Transverse colon (tissue), 4 donors: ENCODE measurements at regions of chr15 and their contacts with region 1.

Region 1: GRCh38 chr15:71114896-71115554 is at the start of gene THSD4:
- DNase-seq: peak; percentile 78
- H3K4me3 ChIP-seq: peak within 1 kb of the TSS; percentile 36 to 81 (median 54)
- H3K27ac ChIP-seq: peak within 1 kb of the TSS; percentile 71 to 86 (median 80)
- H3K4me1 ChIP-seq: peaks cover 3 to 16% (median 9%) of the 10 kb centered on the region in 4 donors
- H3K27me3 ChIP-seq: peaks cover 8% of the 10 kb centered on the region
- CTCF ChIP-seq: peak; percentile 92 to 98 (median 96)
- EP300 ChIP-seq: no peak
- POLR2A ChIP-seq: no peak
- total RNA-seq, gene THSD4: 13.3 to 57.2 (median 47.4) TPM

Region 2: GRCh38 chr15:71079208-71080021 is 35.6 kb before region 1 on chr15:
- in situ Hi-C with region 1: no loop called
- intact Hi-C with region 1: no loop called
- DNase-seq: peak; percentile 52
- H3K4me3 ChIP-seq: peak overlapping the region in 1 of 4 donors; percentile 18
- H3K27ac ChIP-seq: peak overlapping the region; percentile 80 to 86 (median 81)
- H3K4me1 ChIP-seq: peaks cover 0 to 24% (median 14%) of the 10 kb centered on the region in 4 donors
- H3K27me3 ChIP-seq: no peaks in the 10 kb centered on the region
- CTCF ChIP-seq: no peak
- EP300 ChIP-seq: no peak
- POLR2A ChIP-seq: peak; percentile 27

Region 3: DNA sequence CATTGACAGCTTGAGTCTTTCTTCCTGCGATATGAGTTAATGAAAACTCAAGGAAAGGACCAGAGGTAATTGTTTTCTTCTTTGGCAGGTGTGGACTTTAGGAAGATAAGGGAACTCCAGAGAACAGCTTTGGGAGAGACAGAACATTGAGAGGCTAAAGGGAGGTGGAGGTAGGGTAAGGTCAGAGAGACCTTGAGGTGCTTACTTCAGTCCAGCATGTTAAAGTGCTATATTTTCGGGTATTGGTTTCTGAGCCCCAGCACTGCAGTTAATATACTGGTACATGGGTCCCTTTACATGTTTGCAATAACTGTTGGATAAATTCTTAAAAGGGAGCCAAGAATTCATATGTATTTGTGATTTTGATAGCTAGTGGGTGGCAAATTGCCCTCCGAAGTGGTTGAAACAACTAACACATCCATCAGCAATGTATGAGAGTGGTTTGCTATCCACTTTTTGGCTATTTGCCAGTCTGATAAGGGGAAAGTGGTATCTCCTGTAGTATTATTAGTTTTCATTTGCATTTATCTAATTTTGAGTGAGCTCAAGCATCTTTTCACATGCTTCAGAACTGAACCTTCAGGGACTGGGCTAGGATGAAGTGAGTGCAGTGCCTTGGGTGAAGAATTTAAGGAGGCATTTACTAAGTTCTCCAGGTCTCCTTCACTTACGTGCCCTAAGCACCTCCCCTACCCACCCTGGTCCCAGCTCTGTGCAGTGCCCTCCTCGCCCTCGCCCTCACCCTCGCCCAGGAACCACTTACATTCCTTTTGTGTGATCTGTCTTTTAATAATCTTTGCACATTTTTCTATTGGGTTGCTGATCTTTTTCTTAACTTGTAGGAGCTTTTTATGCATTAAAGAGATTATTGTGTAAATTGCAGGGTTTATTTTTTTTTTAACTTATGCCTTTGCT is 322.6 kb after region 1 on chr15:
- in situ Hi-C with region 1: loop called (anchors 5 to 10 kb)
- intact Hi-C with region 1: loop called (anchors 2 kb)
- DNase-seq: no peak
- H3K4me3 ChIP-seq: no peak overlapping the region
- H3K27ac ChIP-seq: no peak overlapping the region
- H3K4me1 ChIP-seq: peaks cover 0 to 9% (median 3%) of the 10 kb centered on the region in 4 donors
- H3K27me3 ChIP-seq: no peaks in the 10 kb centered on the region
- CTCF ChIP-seq: no peak
- EP300 ChIP-seq: no peak
- POLR2A ChIP-seq: no peak

Region 4: GRCh38 chr15:71443538-71443937 is 328.5 kb after region 1 on chr15:
- in situ Hi-C with region 1: loop called (anchors 5 to 10 kb)
- intact Hi-C with region 1: loop called (anchors 2 kb)
- DNase-seq: peak; percentile 62
- H3K4me3 ChIP-seq: no peak overlapping the region
- H3K27ac ChIP-seq: no peak overlapping the region
- H3K4me1 ChIP-seq: peaks cover 0 to 29% (median 4%) of the 10 kb centered on the region in 4 donors
- H3K27me3 ChIP-seq: no peaks in the 10 kb centered on the region
- CTCF ChIP-seq: peak; percentile 79 to 91 (median 86)
- EP300 ChIP-seq: no peak
- POLR2A ChIP-seq: no peak

Region 5: GRCh38 chr15:71654720-71655174 is 539.7 kb after region 1 on chr15:
- in situ Hi-C with region 1: no loop called
- intact Hi-C with region 1: loop called (anchors 5 kb)
- DNase-seq: no peak
- H3K4me3 ChIP-seq: no peak overlapping the region
- H3K27ac ChIP-seq: no peak overlapping the region
- H3K4me1 ChIP-seq: no peaks in the 10 kb centered on the region
- H3K27me3 ChIP-seq: no peaks in the 10 kb centered on the region
- CTCF ChIP-seq: no peak
- EP300 ChIP-seq: no peak
- POLR2A ChIP-seq: no peak